Right lobe of liver (tissue), 6 donors: ENCODE measurements at regions of chr1 and their contacts with region 1.

Region 1: GRCh38 chr1:206935491-206936067 is 10.7 kb downstream of the PIGR start:
- DNase-seq: peak; percentile 81 to 84 (median 82)
- ATAC-seq: peak; percentile 95 to 98 (median 96)
- H3K4me3 ChIP-seq: no peak overlapping the region
- H3K27ac ChIP-seq: no peak overlapping the region
- H3K4me1 ChIP-seq: no peaks in the 10 kb centered on the region
- H3K27me3 ChIP-seq: no peaks in the 10 kb centered on the region
- CTCF ChIP-seq: peak; percentile 83 to 98 (median 92)
- POLR2A ChIP-seq: no peak

Region 2: DNA sequence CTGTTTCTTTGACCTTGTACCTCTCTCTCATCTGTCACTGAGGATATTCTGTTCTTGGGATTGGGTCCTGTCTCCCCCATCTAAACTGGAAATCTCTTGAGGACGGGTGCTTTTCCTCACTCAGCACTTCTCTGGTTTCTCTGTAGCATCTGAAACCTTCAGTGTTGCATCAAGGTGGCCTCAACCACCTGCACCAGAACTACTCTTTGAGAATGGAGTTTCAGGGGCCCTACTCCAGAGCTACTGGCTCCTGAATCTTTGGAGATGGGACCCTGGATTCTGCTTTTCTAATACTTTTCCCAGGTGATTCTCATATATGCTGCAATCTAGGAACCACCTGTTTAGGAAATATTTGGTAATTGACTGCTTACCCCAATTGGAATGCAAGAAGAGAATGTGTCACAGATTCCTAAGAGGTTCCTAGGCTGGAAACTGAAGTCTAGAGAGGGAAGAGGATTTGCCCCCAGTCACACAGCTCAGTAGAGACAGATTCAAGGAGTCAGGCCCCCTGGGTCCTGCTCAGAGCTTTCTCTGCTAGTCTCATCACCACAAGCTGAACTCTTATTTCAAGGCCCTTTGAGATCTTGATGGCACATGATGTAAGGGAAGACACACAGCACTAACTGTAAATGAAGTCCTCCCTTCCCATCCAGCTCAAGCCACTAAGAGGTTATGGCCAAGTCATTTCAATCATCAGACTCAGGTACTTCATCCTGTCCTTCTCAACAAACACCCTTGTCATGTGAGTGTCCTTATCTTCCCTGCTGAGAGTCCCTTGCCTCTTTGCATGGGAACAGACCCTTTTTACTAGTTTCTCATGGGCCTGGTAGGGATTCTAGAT is 372.0 kb before region 1 on chr1:
- intact Hi-C with region 1: no loop called
- DNase-seq: no peak
- ATAC-seq: no peak
- H3K4me3 ChIP-seq: no peak overlapping the region
- H3K27ac ChIP-seq: no peak overlapping the region
- H3K4me1 ChIP-seq: peaks cover 0 to 27% (median 4%) of the 10 kb centered on the region in 4 donors
- H3K27me3 ChIP-seq: no peaks in the 10 kb centered on the region
- CTCF ChIP-seq: no peak
- POLR2A ChIP-seq: no peak

Region 3: DNA sequence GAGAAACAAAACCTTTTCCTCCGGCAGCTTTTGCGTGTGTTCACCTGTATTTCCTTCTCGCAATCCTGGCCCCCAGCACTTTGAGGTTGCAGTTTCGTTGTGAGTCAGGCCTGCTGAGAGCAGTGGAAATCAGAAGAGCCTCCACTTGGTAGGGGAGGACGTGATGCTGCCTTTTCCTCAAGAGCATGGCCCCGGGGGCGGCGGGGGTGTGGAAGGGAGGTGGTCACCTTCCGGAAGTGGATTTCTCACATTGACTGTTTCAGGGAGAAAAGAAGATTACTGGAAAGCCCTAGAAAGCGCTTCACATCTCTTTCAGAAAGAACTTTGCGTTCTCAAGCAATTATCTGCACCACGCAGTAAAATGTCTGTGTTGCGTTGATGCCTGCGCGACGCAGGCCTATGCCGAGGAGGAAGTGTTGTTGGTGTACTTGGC is 151.1 kb before region 1 on chr1:
- intact Hi-C with region 1: no loop called
- DNase-seq: no peak
- ATAC-seq: peak in 1 of 4 donors; percentile 36
- H3K4me3 ChIP-seq: no peak overlapping the region
- H3K27ac ChIP-seq: no peak overlapping the region
- H3K4me1 ChIP-seq: no peaks in the 10 kb centered on the region
- H3K27me3 ChIP-seq: no peaks in the 10 kb centered on the region
- CTCF ChIP-seq: no peak
- POLR2A ChIP-seq: no peak

Region 4: DNA sequence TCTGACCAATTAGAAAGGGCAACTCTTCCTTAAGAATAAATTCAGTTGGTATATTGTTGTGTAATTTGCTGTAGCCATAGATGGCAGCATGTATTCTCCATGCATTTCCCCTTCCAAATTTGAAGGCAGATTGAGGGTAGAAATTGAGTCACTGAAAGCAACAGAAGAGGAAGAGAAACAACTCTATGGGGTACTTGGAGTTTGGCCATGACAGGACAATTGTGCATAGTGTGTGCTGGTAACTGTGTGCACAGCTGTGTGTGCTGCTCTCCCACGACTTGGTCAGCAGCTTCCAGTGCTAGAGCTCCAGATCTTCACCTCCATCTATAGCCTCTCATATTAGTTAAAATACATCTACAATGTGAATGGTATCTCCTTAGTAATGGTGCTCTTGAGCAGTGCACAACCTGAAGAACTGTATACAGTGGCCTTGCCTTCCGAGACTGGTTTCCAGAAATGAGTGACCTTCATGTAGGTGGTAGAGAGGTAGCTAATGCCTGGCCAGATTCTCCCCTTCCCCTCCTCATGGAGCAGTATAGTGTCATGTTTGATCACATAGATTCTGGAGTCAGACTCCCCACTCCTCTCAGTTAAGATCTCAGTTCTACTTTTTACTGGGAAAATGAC is 35.6 kb after region 1 on chr1:
- intact Hi-C with region 1: loop called (anchors 5 kb)
- DNase-seq: no peak
- ATAC-seq: no peak
- H3K4me3 ChIP-seq: no peak overlapping the region
- H3K27ac ChIP-seq: peak overlapping the region in 2 of 3 donors; percentile 49 to 58
- H3K4me1 ChIP-seq: peaks cover 0 to 54% (median 16%) of the 10 kb centered on the region in 4 donors
- H3K27me3 ChIP-seq: no peaks in the 10 kb centered on the region
- CTCF ChIP-seq: no peak
- POLR2A ChIP-seq: no peak

Region 5: DNA sequence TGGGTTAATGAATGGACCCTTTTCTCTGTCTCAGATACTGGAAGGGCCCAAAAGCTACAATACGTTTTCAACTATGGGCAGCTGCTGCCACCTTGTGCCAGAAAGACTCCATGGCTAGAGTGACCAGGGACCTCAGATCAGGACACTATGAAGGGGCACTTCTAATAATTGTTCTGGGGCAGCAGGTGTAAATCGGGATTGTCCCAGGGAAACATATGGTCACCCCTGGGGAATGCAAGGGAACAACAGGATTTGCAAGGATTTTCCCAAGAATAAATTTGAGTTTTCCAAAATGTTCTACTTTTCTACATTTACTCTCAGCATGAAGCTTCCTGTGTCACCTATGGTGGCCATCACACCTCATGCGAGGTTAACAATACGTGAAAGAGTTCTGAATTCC is 46.6 kb after region 1 on chr1:
- intact Hi-C with region 1: loop called in 1 of 2 experiments (anchors 5 kb)
- DNase-seq: peak in 2 of 3 donors; percentile 44 to 58
- ATAC-seq: peak; percentile 92 to 94 (median 92)
- H3K4me3 ChIP-seq: no peak overlapping the region
- H3K27ac ChIP-seq: no peak overlapping the region
- H3K4me1 ChIP-seq: no peaks in the 10 kb centered on the region
- H3K27me3 ChIP-seq: no peaks in the 10 kb centered on the region
- CTCF ChIP-seq: peak; percentile 77 to 89 (median 82)
- POLR2A ChIP-seq: no peak